Right ventricle myocardium inferior (tissue), 1 donor: ENCODE measurements at regions of chr6 and their contacts with region 1.

Region 1: GRCh38 chr6:137641474-137642077 is 147.4 kb upstream of the OLIG3 start:
- DNase-seq: peak; percentile 66
- ATAC-seq: peak; percentile 95

Region 2: DNA sequence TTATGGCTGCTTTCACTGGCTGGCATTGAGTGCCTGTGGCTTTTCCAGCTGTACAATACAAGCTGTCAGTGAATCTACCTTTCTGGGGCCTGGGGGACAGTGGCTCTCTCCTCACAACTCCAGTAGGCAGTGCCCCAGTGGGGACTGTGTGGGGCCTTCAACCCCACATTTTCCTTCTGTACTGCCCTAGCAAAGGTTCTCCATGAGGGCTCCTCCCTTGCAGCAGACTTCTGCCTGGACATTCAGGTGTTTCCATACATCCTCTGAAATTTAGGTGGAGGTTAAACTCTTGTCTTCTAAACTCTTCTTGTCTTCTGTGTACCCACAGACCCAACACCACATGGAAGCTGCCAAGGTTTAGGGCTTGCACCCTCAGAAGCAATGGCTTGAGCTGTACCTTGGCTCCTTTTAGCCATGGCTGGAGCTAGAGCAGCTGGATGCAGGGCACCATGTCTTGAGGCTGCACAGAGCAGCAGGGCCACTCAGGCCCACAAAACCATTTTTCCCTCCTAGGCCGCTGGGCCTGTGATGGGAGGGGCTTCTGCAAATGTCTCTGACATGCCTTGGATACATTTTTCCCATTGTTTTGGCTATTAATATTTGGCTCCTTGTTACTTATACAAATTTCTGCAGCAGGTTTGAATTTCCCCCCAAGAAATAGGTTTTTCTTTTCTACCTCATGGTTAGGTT is 809.6 kb before region 1 on chr6:
- intact Hi-C with region 1: loop called (anchors 10 kb)
- DNase-seq: no peak
- ATAC-seq: no peak

Region 3: GRCh38 chr6:136967876-136968752 is 673.5 kb before region 1 on chr6:
- intact Hi-C with region 1: loop called (anchors 10 kb)
- DNase-seq: no peak
- ATAC-seq: peak; percentile 58

Region 4: GRCh38 chr6:137076277-137077068 is 565.1 kb before region 1 on chr6:
- intact Hi-C with region 1: loop called (anchors 1 kb)
- DNase-seq: peak; percentile 81
- ATAC-seq: peak; percentile 98

Region 5: DNA sequence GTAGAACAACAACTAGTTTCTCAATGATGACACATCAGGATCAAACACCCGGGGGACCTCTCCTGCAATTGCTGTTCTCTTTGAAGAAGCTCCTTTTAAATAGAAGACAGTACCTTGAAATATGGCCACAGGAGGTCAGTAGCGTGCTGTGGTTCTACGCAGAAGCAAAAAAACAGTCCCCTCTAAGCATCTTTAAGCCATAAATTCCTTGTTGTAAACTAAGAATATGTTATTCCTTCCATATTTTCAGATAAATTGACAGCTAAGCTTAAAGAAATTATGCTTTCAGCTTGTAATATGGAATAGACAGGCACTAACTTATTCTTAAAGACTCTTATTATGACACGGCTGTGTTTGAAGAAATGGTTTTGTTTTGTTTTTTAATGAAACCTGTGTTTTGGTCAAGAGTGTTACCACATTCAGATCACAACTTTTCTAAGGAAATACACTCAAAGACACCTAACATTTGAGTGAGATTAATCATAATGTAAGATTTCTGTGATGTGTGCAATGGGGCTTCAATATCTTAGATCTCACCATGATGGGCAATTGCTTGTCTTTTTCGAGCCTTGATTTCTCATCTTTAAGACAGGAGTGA is 547.1 kb before region 1 on chr6:
- intact Hi-C with region 1: loop called (anchors 5 kb)
- DNase-seq: no peak
- ATAC-seq: peak; percentile 67

Region 6: GRCh38 chr6:137271245-137272183 is 370.1 kb before region 1 on chr6:
- intact Hi-C with region 1: loop called (anchors 2 kb)
- DNase-seq: no peak
- ATAC-seq: peak; percentile 74